ENCODE measurements at regions of chr17 and their contacts with region 1.

Region 1: GRCh38 chr17:70552230-70552981 is 383.1 kb downstream of the KCNJ2 start:
- DNase-seq: peak; percentile 26 to 42
- ATAC-seq: peak; percentile 57 to 64; a peak in 4 of 6 replicates
- H3K4me3 ChIP-seq: no peak overlapping the region
- H3K27ac ChIP-seq: no peak overlapping the region
- H3K4me1 ChIP-seq: no peaks in the 10 kb centered on the region
- CTCF ChIP-seq: peak; percentile 77
- EP300 ChIP-seq: no peak
- POLR2A ChIP-seq: no peak
- RAD21 ChIP-seq: peak; percentile 68 to 80

Region 2: DNA sequence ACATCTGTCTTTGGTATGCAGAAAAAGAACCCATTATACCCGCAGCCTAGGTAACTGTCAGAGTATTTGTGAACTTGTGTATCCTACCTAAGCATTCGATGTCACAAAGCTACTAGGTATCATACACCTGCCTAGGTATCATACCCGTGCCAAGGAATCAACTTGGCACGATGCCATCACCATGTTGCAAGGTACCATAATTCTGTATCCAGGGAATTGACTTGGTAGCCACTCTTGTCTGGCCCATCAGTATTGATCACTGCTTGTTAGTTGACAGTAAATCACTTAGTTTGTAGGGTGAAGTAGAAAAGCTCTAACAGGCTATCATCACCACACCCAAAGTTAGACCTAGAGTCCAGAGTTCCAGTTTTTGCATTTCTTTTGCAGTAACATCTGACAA is 1021.2 kb before region 1 on chr17:
- CTCF ChIA-PET with region 1: interaction called, 64 read pairs
- POLR2A ChIA-PET with region 1: no interaction called
- DNase-seq: no peak
- ATAC-seq: no peak
- H3K4me3 ChIP-seq: no peak overlapping the region
- H3K27ac ChIP-seq: no peak overlapping the region
- H3K4me1 ChIP-seq: no peaks in the 10 kb centered on the region
- CTCF ChIP-seq: no peak
- EP300 ChIP-seq: no peak
- POLR2A ChIP-seq: no peak
- RAD21 ChIP-seq: no peak

Region 3: GRCh38 chr17:69567130-69567529 is 985.3 kb before region 1 on chr17:
- CTCF ChIA-PET with region 1: interaction called, 34 read pairs
- POLR2A ChIA-PET with region 1: interaction called, 4 read pairs
- DNase-seq: no peak
- ATAC-seq: no peak
- H3K4me3 ChIP-seq: no peak overlapping the region
- H3K27ac ChIP-seq: no peak overlapping the region
- H3K4me1 ChIP-seq: no peaks in the 10 kb centered on the region
- CTCF ChIP-seq: no peak
- EP300 ChIP-seq: no peak
- POLR2A ChIP-seq: no peak
- RAD21 ChIP-seq: no peak

Region 4: GRCh38 chr17:70168977-70169708 is 383.3 kb before region 1 on chr17 and contains the start of gene KCNJ2:
- CTCF ChIA-PET with region 1: interaction called, 25 read pairs
- POLR2A ChIA-PET with region 1: no interaction called
- DNase-seq: peak; percentile 68 to 85
- ATAC-seq: peak; percentile 92 to 97
- H3K4me3 ChIP-seq: peak within 1 kb of the TSS; percentile 54
- H3K27ac ChIP-seq: peak within 1 kb of the TSS; percentile 61 to 80
- H3K4me1 ChIP-seq: peaks cover 10% of the 10 kb centered on the region
- CTCF ChIP-seq: no peak
- EP300 ChIP-seq: no peak
- POLR2A ChIP-seq: peak; percentile 48
- RAD21 ChIP-seq: 0 out of 5 replicates have a peak, but pooled peaks of 1 of the 2 experiments have one; percentile 9
- polyA plus RNA-seq, gene KCNJ2: 0.14 and 0.40 TPM in 2 replicates

Region 5: GRCh38 chr17:70420861-70421449 is 131.5 kb before region 1 on chr17:
- CTCF ChIA-PET with region 1: no interaction called
- POLR2A ChIA-PET with region 1: no interaction called
- DNase-seq: no peak
- ATAC-seq: no peak
- H3K4me3 ChIP-seq: no peak overlapping the region
- H3K27ac ChIP-seq: no peak overlapping the region
- H3K4me1 ChIP-seq: no peaks in the 10 kb centered on the region
- CTCF ChIP-seq: no peak
- EP300 ChIP-seq: no peak
- POLR2A ChIP-seq: no peak
- RAD21 ChIP-seq: no peak

Region 6: DNA sequence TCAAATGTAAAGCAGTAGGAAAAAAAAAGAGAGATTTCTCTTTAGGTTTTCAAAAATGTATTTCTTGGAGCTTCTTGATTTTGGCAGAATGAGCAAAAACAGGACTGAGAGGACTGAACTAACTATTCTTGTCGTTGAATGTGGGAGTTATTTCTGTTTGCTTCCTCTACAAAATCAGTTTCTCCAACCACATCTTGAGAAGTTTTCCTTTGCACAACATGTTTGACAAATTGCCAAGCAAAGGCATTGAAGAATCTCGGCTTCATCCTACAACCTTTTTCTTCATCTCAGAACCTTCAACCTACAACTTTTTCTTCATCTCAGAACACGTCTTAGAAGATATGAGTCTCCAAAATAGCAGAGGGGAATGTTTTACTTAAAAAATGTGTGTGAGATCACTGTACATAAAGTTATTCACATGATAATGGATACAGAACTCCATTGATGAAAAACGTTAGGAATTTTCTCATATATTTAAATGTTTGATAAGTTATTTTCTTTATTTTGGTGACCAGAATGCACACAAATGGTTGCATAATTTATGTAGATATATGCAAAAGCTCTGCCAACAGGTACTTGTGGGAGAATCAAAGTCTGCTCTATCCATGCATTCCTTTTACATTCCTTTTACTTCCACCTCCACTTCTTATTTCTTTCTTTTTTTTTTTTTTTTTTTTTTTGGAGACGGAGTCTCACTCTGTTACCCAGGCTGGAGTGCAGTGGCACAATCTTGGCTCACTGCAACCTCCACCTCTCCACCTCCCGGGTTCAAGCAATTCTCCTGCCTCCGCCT is 13.1 kb before region 1 on chr17:
- CTCF ChIA-PET with region 1: interaction called, 13 read pairs
- POLR2A ChIA-PET with region 1: no interaction called
- DNase-seq: no peak
- ATAC-seq: no peak
- H3K4me3 ChIP-seq: no peak overlapping the region
- H3K27ac ChIP-seq: no peak overlapping the region
- H3K4me1 ChIP-seq: no peaks in the 10 kb centered on the region
- CTCF ChIP-seq: no peak
- EP300 ChIP-seq: no peak
- POLR2A ChIP-seq: no peak
- RAD21 ChIP-seq: no peak

Region 7: DNA sequence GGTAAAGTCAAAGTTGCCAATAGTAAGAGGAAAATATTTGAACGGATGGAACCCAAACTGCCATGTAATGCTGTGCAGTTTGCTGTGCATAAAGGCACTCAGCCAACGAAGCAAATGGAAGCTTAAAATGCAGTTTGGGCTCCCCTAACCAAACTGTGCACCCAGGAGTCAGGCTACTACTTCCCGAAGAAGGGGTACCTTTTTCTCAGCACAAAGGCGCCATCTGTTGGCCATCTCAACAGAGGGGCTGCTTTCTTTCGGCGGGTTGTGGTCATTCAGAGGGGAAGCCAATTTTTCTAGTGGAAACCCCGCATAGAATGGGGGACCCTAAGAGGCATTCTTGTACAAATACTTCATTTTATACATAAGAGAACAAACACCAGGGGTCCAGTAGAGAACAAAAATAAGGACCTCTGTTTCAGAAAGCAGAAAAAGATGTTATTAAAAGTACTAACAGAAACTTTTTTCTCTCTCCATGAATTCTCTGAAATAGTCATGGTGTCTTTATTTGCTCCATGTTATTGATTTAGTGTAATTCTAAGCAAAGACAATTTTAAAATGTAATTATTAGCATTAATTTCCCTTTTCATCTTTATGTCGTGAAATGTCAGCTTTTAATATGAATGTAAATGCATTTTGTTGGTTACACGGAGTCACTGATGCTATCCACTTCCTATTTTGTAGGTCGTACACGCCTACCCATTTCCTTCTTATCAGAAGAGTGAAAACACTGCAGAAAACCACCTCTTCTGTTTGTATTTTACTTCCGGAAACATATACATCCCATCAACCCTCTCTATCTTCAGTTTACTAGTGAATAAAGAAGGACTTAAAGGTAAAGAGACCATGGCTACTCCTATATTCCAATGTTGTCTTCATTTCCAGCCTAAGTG is 70.2 kb after region 1 on chr17:
- CTCF ChIA-PET with region 1: interaction called, 11 read pairs
- POLR2A ChIA-PET with region 1: no interaction called
- DNase-seq: peak; percentile 25 to 34
- ATAC-seq: peak; percentile 54 to 80; a peak in 4 of 6 replicates
- H3K4me3 ChIP-seq: no peak overlapping the region
- H3K27ac ChIP-seq: no peak overlapping the region
- H3K4me1 ChIP-seq: no peaks in the 10 kb centered on the region
- CTCF ChIP-seq: peak; percentile 67
- EP300 ChIP-seq: no peak
- POLR2A ChIP-seq: no peak
- RAD21 ChIP-seq: peak; percentile 72 to 76

Measured in A549 (cell line).